ENCODE measurements at regions of chr17 and their contacts with region 1.

Region 1: DNA sequence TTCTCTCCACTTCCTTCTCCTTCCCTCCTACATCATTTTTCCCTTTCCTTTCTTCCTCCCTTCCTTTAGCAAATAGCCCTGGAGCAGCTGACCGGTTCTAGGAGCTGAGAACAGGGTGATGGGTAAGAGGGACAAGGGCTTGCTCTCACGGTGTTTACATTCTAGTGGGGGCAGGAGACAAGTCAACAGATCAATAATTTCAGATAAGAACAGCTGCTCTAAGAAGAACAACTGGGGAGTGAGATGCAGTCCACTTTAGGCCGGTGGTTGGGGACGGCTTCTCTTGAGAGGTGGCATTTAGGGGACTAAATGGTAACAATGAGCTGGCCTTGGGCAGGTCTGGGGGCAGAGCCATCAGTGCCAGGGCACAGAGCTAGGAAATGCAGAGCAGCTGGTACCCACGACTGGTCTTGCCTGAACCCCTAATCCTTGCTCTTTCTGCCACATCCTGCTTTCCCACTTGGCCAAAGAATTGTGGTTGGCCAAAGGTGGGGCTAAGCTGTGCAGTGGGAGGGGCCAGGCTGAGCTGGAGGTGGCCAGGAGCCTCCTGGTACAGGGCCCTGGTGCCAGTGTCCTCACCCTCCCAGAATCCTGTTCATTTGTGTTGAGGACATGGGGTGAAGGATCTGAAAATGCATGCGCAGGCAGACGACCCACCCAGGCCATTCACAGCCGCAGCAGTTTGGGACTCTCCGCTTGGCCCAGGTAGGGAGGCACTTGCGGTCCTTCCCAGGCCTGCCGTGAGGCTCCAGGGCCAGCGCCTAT is 17.7 kb downstream of the CBX4 start:
- DNase-seq: no peak
- H3K4me3 ChIP-seq: no peak overlapping the region
- H3K27ac ChIP-seq: no peak overlapping the region
- H3K4me1 ChIP-seq: no peaks in the 10 kb centered on the region
- H3K27me3 ChIP-seq: no peaks in the 10 kb centered on the region
- CTCF ChIP-seq: no peak

Region 2: DNA sequence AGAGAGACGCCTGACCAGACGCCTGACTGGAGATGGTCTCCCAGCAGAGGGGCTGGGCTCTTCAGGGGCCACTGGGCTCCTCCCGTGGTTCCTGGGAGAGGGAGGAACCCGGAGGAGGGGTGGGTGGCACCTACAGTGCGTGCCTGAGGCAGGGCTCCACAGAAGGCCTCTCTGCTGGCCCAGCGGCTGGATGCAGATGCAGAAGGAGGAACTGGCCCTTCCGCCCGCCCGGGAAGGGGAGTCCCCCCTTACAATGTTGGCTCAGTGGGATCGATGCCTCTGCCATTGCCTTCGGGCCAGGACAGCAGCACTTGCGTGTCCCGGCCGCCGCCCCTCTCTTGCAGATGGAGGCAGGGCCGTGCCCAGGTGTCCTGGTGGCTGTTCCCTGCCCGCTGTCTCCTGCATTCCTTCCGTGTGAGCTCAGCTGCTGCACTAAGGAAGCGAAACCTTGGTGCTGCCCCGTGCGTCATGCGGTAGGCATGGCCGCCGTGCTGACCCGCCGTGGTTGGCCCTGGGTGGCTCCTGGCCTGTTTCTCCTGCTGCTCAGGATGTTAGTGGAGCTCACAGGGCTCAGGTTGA is 1228.5 kb after region 1 on chr17:
- CTCF ChIA-PET with region 1: no interaction called
- POLR2A ChIA-PET with region 1: interaction called, 30 read pairs
- intact Hi-C with region 1: no loop called
- DNase-seq: peak; percentile 96 to 97
- H3K4me3 ChIP-seq: peak overlapping the region; percentile 41; the same call in 1 of the 2 replicates
- H3K27ac ChIP-seq: peak overlapping the region; percentile 87
- H3K4me1 ChIP-seq: peaks cover 56% of the 10 kb centered on the region
- H3K27me3 ChIP-seq: no peaks in the 10 kb centered on the region
- CTCF ChIP-seq: no peak

Measured in PC-9 (cell line).